MCF 10A (cell line): ENCODE measurements at regions of chr1 and their contacts with region 1.

Region 1: DNA sequence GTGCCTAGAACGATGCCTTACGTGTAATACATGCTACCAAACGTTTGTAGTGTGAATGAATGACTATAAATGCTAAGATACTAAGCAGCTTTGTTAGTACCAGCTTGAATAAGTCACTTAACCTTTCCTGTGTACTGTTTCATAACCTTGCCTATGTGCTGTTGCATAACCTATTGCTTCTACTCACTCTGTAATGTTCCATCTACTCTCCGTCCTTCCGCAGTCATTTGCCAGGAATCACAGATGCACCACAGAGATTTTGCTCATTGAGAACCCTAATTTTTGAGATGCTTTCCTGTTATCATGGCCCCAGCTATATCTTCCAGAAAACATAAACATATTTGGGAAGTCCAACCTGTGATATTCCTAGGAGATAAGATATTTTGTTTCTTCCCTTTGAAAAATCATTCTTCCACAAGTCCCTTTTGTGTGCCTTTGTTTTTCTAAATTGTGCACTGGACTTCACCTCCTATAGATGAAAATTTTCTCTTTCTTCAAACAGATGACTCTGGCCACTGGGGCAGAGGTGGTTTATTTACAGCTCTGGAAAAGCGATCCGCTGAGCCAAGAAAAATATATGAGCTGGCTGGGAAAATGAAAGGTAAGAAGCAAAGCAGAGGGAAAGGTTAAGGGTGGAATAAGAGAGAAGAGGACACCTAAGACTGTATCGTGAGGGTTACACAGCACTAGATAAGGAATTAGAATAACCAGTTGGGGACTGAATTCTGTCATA is 44.8 kb downstream of the CHD1L start:
- DNase-seq: peak; percentile 38
- H3K4me3 Mint-ChIP-seq: no peak overlapping the region
- H3K27ac Mint-ChIP-seq: no peak overlapping the region
- H3K4me1 Mint-ChIP-seq: peaks cover 5% of the 10 kb centered on the region
- H3K27me3 Mint-ChIP-seq: no peaks in the 10 kb centered on the region
- CTCF ChIP-seq: no peak

Region 2: DNA sequence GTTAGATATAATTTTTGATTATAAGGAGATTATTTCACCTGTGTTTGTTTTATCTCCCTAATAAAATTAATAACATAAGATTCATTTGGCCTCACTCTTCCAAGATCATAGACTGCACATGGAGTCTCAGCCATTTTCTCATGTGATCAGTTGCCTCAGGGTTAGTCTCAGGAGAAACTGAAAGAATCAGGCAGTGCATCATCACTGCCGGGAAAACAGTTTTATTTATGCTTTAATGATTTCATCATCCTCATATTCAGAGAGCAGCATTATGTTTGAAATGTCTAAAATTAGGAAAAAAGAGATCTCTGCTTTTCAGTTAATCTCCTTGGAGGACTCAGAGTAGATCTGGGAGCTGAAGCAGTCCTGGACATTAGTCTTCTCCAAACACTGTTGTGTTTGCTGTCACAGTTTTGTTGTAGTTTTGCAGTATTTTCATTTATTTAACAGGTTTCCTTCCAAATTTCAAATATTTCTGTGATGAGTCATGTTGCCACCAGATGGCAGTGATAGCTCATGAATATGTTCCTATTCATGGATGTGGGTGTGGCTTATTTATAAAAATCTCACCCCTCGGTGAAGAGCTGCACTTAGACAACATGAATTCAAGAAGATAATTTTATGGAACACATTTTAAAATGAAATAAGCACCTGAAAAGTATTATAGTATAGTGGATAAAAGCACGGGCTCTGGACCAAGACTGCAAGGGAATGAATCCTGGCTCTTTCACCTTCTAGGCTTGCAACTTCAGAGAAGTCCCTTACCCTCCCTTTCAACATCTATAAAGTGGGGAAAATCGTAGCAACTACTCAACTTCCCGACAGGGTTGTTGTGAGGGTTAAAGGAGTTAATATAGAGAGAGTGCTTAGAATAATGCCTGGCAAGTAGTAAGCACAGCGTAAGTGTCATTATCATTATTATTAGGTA is 13.6 kb before region 1 on chr1:
- CTCF ChIA-PET with region 1: interaction called, 22 read pairs
- POLR2A ChIA-PET with region 1: interaction called, 7 read pairs
- intact Hi-C with region 1: no loop called
- DNase-seq: peak; percentile 92
- H3K4me3 Mint-ChIP-seq: peak overlapping the region; percentile 55
- H3K27ac Mint-ChIP-seq: peak overlapping the region; percentile 93
- H3K4me1 Mint-ChIP-seq: peaks cover 14% of the 10 kb centered on the region
- H3K27me3 Mint-ChIP-seq: no peaks in the 10 kb centered on the region
- CTCF ChIP-seq: peak; percentile 37

Region 3: DNA sequence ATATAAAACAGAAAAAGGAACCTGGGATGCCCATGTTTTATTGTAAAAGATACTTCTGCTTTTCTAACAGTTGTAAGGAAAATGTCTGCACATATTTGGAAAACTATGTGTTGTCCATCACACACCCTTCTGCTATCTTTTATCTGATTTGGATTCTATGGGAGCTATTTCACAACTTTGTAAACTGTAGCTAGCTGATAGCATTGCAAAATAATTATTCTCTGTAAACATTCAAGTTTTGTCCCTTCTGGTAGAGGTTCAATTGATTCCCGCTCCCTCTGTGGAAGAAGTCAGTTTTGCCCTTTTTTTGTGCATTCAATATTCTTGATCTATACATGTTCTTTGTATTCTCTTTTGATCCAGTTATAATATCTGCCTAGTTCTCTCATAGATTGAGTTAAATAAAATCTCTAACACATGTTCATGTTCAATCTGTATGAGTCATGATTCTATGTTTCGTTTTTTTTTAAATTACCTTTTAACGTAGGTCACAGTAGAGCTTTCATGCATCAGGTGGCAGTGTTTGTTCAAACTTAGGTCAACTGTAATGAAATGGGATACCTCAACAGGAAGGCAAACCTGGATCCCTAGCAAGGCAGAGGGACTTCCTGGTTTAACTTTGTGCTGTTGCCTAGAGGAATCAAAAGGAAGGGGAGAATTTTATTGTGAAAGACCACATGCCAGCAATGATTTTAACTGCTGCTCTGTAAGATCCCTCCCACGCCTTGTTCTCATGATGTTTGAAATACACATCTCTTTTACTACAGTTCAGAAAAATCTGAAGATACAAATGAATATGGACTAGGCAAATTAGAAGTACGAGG is 228.0 kb after region 1 on chr1:
- CTCF ChIA-PET with region 1: no interaction called
- POLR2A ChIA-PET with region 1: no interaction called
- intact Hi-C with region 1: no loop called
- DNase-seq: peak; percentile 84
- H3K4me3 Mint-ChIP-seq: no peak overlapping the region
- H3K27ac Mint-ChIP-seq: no peak overlapping the region
- H3K4me1 Mint-ChIP-seq: peaks cover 7% of the 10 kb centered on the region
- H3K27me3 Mint-ChIP-seq: no peaks in the 10 kb centered on the region
- CTCF ChIP-seq: peak; percentile 27